Activated T-helper 2 cell treated with anti-CD3 and anti-CD28 coated beads, Interferon-gamma antibody, Interleukin-2, Interleukin-4, amounts not matched to agents 10 μg/mL and 5 μg/mL and 100 μg/mL, durations not matched to agents 14 hours and 24 hours and 36 hours (primary cell): ENCODE measurements at regions of chr6 and their contacts with region 1.

Region 1: GRCh38 chr6:45714741-45715507 is 300.7 kb downstream of the CLIC5 start:
- DNase-seq: peak; percentile 49
- H3K4me3 Mint-ChIP-seq: peak overlapping the region; percentile 28
- H3K27ac Mint-ChIP-seq: peak overlapping the region; percentile 94
- H3K4me1 Mint-ChIP-seq: peaks cover 79% of the 10 kb centered on the region
- H3K27me3 Mint-ChIP-seq: no peaks in the 10 kb centered on the region

Region 2: DNA sequence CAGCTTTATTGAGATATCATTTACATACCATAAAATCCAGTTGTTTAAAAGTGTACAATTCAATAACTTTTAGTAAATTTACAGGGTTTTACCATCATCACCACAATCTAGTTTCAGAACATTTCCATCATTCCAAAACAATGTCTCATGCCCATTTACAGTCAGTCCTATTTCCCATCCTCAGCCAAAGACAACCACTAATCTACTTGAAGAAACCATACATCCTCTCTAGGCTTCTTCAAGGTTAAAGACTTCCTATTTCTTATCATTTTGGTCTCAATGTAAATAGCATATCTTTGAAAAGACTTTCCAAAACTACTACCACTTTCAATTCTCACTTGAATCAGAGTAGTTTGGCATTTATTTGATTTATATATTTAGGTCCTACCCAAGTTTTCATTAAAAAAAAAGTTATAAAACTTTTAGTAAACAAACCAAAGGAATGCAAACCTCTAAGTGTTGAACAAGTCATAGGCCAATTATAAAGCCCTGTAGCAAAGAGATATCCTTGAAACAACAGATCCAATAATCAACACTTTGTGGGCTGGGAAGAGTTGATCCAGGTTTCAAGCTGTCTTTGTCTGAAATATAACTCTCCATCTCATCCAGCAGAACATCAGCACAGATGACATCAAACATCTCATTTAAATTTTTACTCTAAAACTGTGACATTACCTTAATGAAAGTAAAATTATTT is 598.1 kb before region 1 on chr6:
- intact Hi-C with region 1: loop called (anchors 5 kb)
- DNase-seq: no peak
- H3K4me3 Mint-ChIP-seq: no peak overlapping the region
- H3K27ac Mint-ChIP-seq: peak overlapping the region; percentile 34
- H3K4me1 Mint-ChIP-seq: peaks cover 27% of the 10 kb centered on the region
- H3K27me3 Mint-ChIP-seq: no peaks in the 10 kb centered on the region

Region 3: GRCh38 chr6:45421709-45422502 is 293.0 kb before region 1 on chr6:
- intact Hi-C with region 1: loop called (anchors 1 kb)
- DNase-seq: peak; percentile 64
- H3K4me3 Mint-ChIP-seq: peak overlapping the region; percentile 100
- H3K27ac Mint-ChIP-seq: peak overlapping the region; percentile 99
- H3K4me1 Mint-ChIP-seq: peaks cover 45% of the 10 kb centered on the region
- H3K27me3 Mint-ChIP-seq: no peaks in the 10 kb centered on the region

Region 4: GRCh38 chr6:45590225-45590624 is 124.7 kb before region 1 on chr6:
- intact Hi-C with region 1: loop called (anchors 1 kb)
- DNase-seq: no peak
- H3K4me3 Mint-ChIP-seq: no peak overlapping the region
- H3K27ac Mint-ChIP-seq: peak overlapping the region; percentile 86
- H3K4me1 Mint-ChIP-seq: peaks cover 86% of the 10 kb centered on the region
- H3K27me3 Mint-ChIP-seq: no peaks in the 10 kb centered on the region

Region 5: GRCh38 chr6:45737331-45738056 is 22.6 kb after region 1 on chr6:
- intact Hi-C with region 1: loop called (anchors 1 kb)
- DNase-seq: peak; percentile 35
- H3K4me3 Mint-ChIP-seq: peak overlapping the region; percentile 47
- H3K27ac Mint-ChIP-seq: peak overlapping the region; percentile 92
- H3K4me1 Mint-ChIP-seq: peaks cover 69% of the 10 kb centered on the region
- H3K27me3 Mint-ChIP-seq: no peaks in the 10 kb centered on the region

Region 6: GRCh38 chr6:46011241-46012085 is 296.5 kb after region 1 on chr6:
- intact Hi-C with region 1: loop called (anchors 5 kb)
- DNase-seq: peak; percentile 75
- H3K4me3 Mint-ChIP-seq: peak overlapping the region; percentile 30
- H3K27ac Mint-ChIP-seq: peak overlapping the region; percentile 80
- H3K4me1 Mint-ChIP-seq: peaks cover 58% of the 10 kb centered on the region
- H3K27me3 Mint-ChIP-seq: peaks cover 24% of the 10 kb centered on the region